Activated T-helper 1 cell treated with anti-CD3 and anti-CD28 coated beads, Interleukin-12 subunit alpha, Interleukin-12 subunit beta, Interleukin-2, Interleukin-4 antibody, amounts not matched to agents 30 ng/mL and 10 ng/mL and 1 ng/mL, durations not matched to agents 14 hours and 24 hours and 36 hours (primary cell): ENCODE measurements at regions of chr18 and their contacts with region 1.

Region 1: DNA sequence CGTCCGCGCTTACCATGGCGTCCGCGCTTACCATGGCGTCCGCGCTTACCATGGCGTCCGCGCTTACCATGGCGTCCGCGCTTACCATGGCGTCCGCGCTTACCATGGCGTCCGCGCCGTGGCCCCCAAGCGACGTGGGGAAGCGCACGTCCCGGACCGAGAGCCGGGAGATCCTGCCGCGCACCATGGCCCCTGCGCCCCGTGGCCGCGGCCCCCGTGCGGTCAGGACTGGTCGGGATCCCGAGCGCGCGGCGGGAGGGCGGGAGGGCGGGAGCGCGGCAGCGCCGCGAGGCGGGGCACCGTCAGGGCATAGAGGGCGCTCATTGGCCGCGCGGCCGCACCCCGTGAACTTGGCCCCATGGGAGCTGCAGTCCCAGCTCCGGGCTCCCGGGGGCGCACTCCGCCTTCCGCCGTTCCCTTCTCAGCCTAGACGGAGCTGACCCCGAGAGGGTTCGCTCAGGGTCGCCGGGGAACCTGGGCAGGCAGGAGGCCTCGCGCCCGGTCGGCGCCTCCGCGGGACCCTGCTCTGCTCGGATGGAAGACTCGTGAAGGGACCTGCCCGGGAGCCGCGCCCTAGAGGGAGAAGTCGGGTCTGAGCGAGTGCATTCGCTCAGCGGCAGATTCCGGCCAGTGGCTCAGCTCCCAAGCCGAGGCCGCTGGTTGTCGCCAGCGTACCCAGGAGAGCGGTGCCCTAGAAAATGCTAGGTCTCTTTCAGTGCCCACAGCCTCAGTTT is at the start of gene ENOSF1:
- DNase-seq: peak; percentile 84
- H3K4me3 Mint-ChIP-seq: peak within 1 kb of the TSS; percentile 86
- H3K27ac Mint-ChIP-seq: peak within 1 kb of the TSS; percentile 89
- H3K4me1 Mint-ChIP-seq: peaks cover 41% of the 10 kb centered on the region
- H3K27me3 Mint-ChIP-seq: no peaks in the 10 kb centered on the region
- total RNA-seq, gene ENOSF1: 84.4 and 96.1 TPM in 2 replicates

Region 2: GRCh38 chr18:267688-268552 is 444.6 kb before region 1 on chr18 and contains the start of gene THOC1:
- intact Hi-C with region 1: loop called (anchors 2 kb)
- DNase-seq: peak; percentile 92
- H3K4me3 Mint-ChIP-seq: peak within 1 kb of the TSS; percentile 93
- H3K27ac Mint-ChIP-seq: peak within 1 kb of the TSS; percentile 98
- H3K4me1 Mint-ChIP-seq: peaks cover 30% of the 10 kb centered on the region
- H3K27me3 Mint-ChIP-seq: no peaks in the 10 kb centered on the region
- total RNA-seq, gene THOC1: 69.9 and 76.8 TPM in 2 replicates

Region 3: GRCh38 chr18:623761-624620 is 88.6 kb before region 1 on chr18:
- intact Hi-C with region 1: loop called (anchors 2 kb)
- DNase-seq: peak; percentile 41
- H3K4me3 Mint-ChIP-seq: no peak overlapping the region
- H3K27ac Mint-ChIP-seq: no peak overlapping the region
- H3K4me1 Mint-ChIP-seq: no peaks in the 10 kb centered on the region
- H3K27me3 Mint-ChIP-seq: peaks cover 34% of the 10 kb centered on the region

Region 4: DNA sequence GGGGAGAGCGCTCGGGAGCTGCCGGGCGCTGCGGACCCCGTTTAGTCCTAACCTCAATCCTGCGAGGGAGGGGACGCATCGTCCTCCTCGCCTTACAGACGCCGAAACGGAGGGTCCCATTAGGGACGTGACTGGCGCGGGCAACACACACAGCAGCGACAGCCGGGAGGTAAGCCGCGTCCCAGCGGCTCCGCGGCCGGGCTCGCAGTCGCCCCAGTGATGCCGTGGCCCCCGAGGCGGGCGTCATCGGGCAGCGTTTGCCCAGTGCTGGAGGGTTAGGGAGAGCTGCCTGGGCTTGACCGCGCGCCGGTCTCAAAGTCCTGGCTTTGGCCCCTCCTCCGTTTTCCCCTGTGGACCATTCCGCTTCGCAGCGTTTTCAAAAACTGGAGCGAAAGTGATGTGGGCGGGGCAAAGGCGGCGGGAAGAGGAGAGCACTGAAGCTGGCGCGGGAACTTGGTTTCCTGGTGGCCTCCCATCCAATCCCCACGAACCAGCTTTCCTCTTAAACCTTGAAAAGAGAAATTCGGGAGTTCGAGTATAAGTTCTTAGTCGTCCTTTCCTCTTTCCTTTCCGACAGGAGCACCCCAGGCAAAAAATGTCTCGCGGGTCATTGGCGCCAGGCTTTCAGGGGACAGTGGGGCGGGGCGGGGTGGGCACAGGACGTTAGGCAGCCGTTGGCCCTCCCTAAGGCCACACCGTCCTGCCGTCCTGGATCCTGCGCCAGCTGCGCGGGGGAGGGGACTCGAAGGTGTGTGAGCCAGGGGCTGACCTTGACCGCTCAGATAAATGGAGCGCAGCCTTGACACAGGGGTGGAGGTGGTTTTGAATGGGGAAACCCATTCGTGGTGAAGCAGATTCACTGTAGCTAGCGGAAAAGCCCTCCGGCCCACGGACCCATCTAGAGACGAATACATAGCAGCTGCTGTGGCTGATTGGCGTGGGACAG is 54.3 kb before region 1 on chr18:
- intact Hi-C with region 1: loop called (anchors 1 kb)
- DNase-seq: peak; percentile 74
- H3K4me3 Mint-ChIP-seq: peak overlapping the region; percentile 96
- H3K27ac Mint-ChIP-seq: peak overlapping the region; percentile 93
- H3K4me1 Mint-ChIP-seq: peaks cover 39% of the 10 kb centered on the region
- H3K27me3 Mint-ChIP-seq: no peaks in the 10 kb centered on the region

Region 5: GRCh38 chr18:681985-682384 is 30.6 kb before region 1 on chr18:
- intact Hi-C with region 1: loop called (anchors 1 kb)
- DNase-seq: peak; percentile 71
- H3K4me3 Mint-ChIP-seq: peak overlapping the region; percentile 30
- H3K27ac Mint-ChIP-seq: peak overlapping the region; percentile 87
- H3K4me1 Mint-ChIP-seq: peaks cover 25% of the 10 kb centered on the region
- H3K27me3 Mint-ChIP-seq: no peaks in the 10 kb centered on the region

Region 6: DNA sequence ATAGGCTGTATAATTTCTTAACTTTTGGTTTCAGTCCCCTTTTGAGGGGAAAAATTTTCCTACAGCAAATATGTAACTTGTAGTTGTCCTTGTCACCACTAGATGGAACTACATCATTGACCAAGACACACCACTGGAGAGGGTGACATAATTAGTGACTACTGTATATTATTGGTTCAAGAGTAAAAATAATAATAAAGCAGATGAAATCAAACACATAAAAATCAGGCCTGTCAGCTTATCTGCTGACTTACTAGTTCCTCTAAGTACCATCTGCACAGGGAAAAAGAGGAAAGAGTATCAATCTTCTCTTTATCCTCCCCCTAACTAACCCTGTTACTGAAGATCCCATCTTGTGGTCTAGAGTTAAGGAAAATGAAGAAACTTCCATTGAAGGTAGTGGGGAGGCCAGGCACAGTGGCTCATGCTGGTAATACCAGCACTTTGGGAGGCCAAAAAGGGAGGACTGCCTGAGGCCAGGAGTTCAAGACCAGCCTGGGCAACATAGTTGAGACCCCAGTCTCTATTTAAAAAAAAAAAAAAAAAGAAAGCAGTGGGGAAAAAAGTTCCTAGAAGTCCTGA is 29.5 kb after region 1 on chr18:
- intact Hi-C with region 1: no loop called
- DNase-seq: no peak
- H3K4me3 Mint-ChIP-seq: no peak overlapping the region
- H3K27ac Mint-ChIP-seq: no peak overlapping the region
- H3K4me1 Mint-ChIP-seq: no peaks in the 10 kb centered on the region
- H3K27me3 Mint-ChIP-seq: no peaks in the 10 kb centered on the region

Region 7: GRCh38 chr18:830315-830901 is 117.8 kb after region 1 on chr18:
- intact Hi-C with region 1: loop called (anchors 1 kb)
- DNase-seq: peak; percentile 9
- H3K4me3 Mint-ChIP-seq: no peak overlapping the region
- H3K27ac Mint-ChIP-seq: peak overlapping the region; percentile 49
- H3K4me1 Mint-ChIP-seq: peaks cover 12% of the 10 kb centered on the region
- H3K27me3 Mint-ChIP-seq: peaks cover 4% of the 10 kb centered on the region

Region 8: GRCh38 chr18:2655178-2655953 is 1942.8 kb after region 1 on chr18 and contains the start of gene SMCHD1:
- intact Hi-C with region 1: loop called (anchors 10 kb)
- DNase-seq: peak; percentile 86
- H3K4me3 Mint-ChIP-seq: peak within 1 kb of the TSS; percentile 88
- H3K27ac Mint-ChIP-seq: peak within 1 kb of the TSS; percentile 96
- H3K4me1 Mint-ChIP-seq: peaks cover 36% of the 10 kb centered on the region
- H3K27me3 Mint-ChIP-seq: peaks cover 2% of the 10 kb centered on the region
- total RNA-seq, gene SMCHD1: 98.6 and 112 TPM in 2 replicates